Activated CD4-positive, alpha-beta memory T cell treated with anti-CD3 and anti-CD28 coated beads for 36 hours (primary cell): ENCODE measurements at regions of chr2 and their contacts with region 1.

Region 1: DNA sequence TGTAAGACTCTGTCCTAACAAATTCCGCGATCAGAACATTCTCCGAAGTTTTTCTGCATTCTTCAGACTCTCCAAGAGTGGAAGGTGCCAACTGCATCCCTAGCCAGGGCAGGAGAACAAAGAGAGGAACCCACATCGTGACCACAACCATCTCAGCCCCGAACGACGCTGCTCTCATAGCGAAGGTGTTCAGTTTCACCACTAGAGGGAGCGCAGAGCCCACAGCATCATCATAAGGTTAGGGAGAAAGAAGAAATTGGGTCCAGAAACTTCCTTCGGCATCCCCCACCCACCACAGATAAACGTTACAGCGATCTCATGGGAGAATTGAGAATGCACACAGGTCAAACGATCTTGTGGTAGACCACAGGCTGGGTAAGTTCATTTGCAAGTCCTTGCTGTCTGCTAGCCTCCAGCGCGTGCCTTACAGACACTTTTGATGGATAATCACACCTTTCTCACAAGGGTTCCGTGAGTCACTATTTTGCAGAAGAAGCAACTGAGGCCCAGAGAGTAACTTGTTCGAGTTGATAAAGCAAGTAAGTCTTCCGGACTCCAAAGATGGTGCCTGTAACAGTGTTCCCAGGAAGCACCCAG is 53.7 kb upstream of the ARL4C start:
- DNase-seq: peak; percentile 70
- H3K4me3 Mint-ChIP-seq: no peak overlapping the region
- H3K27ac Mint-ChIP-seq: no peak overlapping the region
- H3K4me1 Mint-ChIP-seq: peaks cover 2% of the 10 kb centered on the region
- H3K27me3 Mint-ChIP-seq: peaks cover 10% of the 10 kb centered on the region

Region 2: DNA sequence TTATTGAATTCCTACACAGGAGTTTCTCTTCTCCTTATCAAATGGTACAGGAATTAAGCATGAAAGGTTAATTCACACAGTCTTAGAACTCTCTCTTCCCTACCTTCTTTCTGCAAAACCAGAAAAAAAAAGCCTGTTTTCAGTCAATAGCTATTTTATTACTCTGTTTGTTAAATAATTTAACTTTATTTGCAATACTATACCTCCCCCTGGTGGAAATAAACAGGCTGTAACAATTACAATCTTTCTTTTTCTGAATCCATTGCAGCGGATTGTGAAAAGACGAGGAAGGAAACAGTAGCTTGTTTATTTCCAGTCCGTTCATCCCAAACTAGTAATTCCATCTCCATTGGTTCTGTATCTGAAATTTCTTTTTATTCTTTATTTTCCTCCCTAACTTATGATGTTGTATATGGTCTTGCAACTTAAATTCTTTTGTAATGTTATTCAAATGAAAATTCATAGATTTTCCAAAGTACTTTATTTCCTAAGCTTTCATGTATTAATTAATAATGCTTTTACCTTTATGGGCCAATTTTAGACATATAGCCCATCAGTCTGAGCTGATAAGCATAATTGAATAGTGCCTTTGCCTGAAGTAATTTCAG is 566.4 kb after region 1 on chr2:
- CTCF ChIA-PET with region 1: interaction called, 16 read pairs
- POLR2A ChIA-PET with region 1: no interaction called
- intact Hi-C with region 1: loop called (anchors 1 kb)
- DNase-seq: no peak
- H3K4me3 Mint-ChIP-seq: no peak overlapping the region
- H3K27ac Mint-ChIP-seq: no peak overlapping the region
- H3K4me1 Mint-ChIP-seq: no peaks in the 10 kb centered on the region
- H3K27me3 Mint-ChIP-seq: peaks cover 10% of the 10 kb centered on the region

Region 3: DNA sequence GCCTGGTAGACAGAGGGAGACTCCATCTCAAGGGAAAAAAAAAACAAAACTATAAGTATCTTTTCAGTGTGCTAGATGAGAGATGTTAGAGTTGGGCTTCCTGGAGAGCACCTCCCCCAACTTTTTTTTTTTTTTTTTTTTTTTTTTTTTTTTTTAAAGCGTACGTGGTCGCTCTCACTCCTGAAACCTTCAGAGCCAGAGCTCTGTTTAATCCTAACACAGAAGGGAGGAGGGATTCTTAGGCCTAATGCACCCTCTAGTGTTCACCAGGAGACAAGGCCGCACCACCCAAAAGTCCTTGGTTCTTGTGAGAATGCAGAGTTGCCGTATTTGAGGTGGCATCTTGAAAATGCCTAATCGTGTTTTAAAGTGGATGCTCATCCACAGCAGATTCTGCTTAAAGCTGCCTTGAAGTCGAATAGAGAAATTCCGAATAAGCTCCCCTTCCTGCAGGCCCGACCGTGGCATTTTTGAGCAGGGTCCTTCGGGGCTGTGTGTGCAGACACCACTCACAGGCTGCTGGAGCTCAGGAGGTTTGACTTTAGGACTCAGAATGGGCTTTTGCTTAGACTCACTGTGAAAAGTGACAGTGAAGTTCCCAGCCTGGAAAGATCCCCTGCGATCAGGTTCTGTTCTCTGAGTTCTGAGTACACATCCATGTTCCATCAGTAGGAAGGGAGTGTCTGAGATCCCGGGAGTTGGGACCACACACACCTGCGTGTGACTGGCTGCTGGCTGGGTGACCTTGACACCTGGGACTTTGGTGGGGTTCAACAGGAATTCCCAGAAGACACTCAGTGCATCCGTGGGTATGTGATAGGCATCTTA is 1195.9 kb after region 1 on chr2:
- CTCF ChIA-PET with region 1: interaction called, 5 read pairs
- POLR2A ChIA-PET with region 1: no interaction called
- intact Hi-C with region 1: loop called (anchors 10 kb)
- DNase-seq: peak; percentile 64
- H3K4me3 Mint-ChIP-seq: no peak overlapping the region
- H3K27ac Mint-ChIP-seq: no peak overlapping the region
- H3K4me1 Mint-ChIP-seq: no peaks in the 10 kb centered on the region
- H3K27me3 Mint-ChIP-seq: peaks cover 10% of the 10 kb centered on the region